ENCODE measurements at regions of chrX and their contacts with region 1.

Region 1: DNA sequence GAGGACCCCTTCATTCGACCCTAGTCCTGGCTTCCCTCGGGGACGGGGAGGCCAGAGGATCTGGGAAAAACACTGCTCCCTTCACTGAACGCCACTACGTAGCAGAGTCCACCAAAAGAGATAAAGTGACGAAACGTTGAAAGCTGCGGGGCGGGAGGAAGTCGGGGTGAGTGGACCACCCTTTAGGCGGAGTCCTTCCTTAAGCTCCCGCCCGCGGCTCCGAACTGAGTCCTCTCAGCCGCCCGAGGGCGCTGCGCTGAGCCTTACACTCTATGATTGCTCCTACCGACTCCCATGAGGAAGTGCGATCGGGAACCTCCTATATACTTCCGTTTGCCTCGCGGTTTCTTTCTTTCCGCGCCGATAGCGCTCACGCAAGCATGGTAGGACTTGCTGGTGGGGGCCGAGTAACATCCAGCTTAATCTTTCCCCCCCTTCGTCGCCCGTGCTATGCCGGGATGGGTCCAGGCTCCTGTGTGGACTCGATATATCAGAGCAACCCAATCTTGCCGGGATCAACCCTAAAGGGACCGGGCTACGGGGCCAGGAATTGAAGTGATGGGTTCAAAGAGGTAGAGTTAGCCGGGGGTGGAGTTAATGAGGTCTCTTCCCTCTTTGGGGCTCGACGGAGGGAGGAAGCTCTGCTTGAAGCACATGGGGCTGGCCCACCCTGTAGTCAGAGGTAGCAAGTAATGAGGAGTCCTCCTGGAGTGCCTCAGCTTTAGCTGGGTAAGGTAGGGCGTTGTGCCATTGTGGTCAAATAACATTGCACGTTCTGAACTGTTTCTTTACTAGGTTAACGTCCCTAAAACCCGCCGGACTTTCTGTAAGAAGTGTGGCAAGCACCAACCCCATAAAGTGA is at the start of gene RPL36A:
- DNase-seq: peak; percentile 91
- H3K4me3 ChIP-seq: peak within 1 kb of the TSS; percentile 61 to 92 (median 87)
- H3K27ac ChIP-seq: peak within 1 kb of the TSS; percentile 84
- H3K4me1 ChIP-seq: peaks cover 19% of the 10 kb centered on the region
- H3K27me3 ChIP-seq: no peaks in the 10 kb centered on the region
- CTCF ChIP-seq: peak; percentile 68 to 73
- POLR2A ChIP-seq: peak; percentile 96
- total RNA-seq, gene RPL36A: 284 and 329 TPM in 2 replicates

Region 2: GRCh38 chrX:100643956-100644860 is 746.7 kb before region 1 on chrX and contains the start of gene SRPX2:
- CTCF ChIA-PET with region 1: no interaction called
- POLR2A ChIA-PET with region 1: no interaction called
- dilution Hi-C with region 1: no loop called
- intact Hi-C with region 1: loop called (anchors 5 kb)
- DNase-seq: peak; percentile 85
- H3K4me3 ChIP-seq: peak within 1 kb of the TSS; percentile 52 to 95 (median 88)
- H3K27ac ChIP-seq: peak within 1 kb of the TSS; percentile 99
- H3K4me1 ChIP-seq: peaks cover 53% of the 10 kb centered on the region
- H3K27me3 ChIP-seq: no peaks in the 10 kb centered on the region
- CTCF ChIP-seq: no peak
- POLR2A ChIP-seq: peak; percentile 83
- total RNA-seq, gene SRPX2: 124 and 133 TPM in 2 replicates

Region 3: GRCh38 chrX:101348452-101349192 is 42.3 kb before region 1 on chrX and contains the start of gene TIMM8A:
- CTCF ChIA-PET with region 1: interaction called, 6 read pairs
- POLR2A ChIA-PET with region 1: interaction called, 14 read pairs
- dilution Hi-C with region 1: no loop called
- intact Hi-C with region 1: loop called (anchors 2 kb)
- DNase-seq: peak; percentile 74
- H3K4me3 ChIP-seq: peak within 1 kb of the TSS; percentile 78 to 87 (median 85)
- H3K27ac ChIP-seq: peak within 1 kb of the TSS; percentile 84
- H3K4me1 ChIP-seq: no peaks in the 10 kb centered on the region
- H3K27me3 ChIP-seq: no peaks in the 10 kb centered on the region
- CTCF ChIP-seq: no peak
- POLR2A ChIP-seq: peak; percentile 49
- total RNA-seq, gene TIMM8A: 15.2 and 17.5 TPM in 2 replicates

Region 4: DNA sequence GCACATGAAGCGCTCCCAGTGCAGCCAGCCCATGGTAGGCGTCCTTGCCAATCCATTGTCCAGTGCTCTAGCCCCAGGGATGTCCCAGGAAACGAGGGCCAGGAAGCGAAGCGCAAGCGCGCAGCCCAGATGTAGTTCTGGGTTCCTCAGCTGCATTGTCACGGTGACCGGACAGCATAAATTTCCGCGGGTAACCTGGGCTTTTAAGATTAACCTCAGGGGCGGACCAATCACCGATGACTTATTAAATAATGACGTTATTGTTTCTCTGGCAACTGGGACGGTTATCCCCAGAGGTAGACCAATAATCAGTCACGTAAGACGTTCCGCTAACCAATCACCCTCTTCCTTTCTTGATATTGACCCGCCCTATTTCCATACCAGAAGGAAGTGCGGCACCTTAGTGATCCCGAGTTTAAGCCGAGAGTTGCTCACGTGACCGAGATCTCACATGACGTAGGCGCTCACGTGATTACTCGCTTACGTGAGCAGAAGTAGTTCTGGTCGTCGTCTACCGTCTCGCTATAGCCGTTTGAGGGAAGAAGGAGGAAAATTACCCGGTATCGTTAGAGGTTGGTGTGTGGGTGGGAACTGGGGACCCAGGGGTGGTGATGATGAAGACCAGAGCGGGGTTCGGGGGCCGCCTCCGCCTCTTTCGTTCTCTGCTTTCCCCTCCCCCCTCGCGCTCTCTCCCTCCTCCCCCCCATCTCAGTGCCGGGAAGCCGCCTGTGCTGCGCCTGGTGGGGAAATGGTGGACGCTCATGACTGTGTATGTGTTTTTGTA is 17.0 kb after region 1 on chrX and contains the starts of genes GLA and HNRNPH2:
- CTCF ChIA-PET with region 1: interaction called, 4 read pairs
- POLR2A ChIA-PET with region 1: interaction called, 6 read pairs
- dilution Hi-C with region 1: no loop called
- intact Hi-C with region 1: loop called (anchors 1 kb)
- DNase-seq: peak; percentile 98
- H3K4me3 ChIP-seq: peak within 1 kb of the TSS; percentile 78 to 95 (median 91)
- H3K27ac ChIP-seq: peak within 1 kb of the TSS; percentile 97
- H3K4me1 ChIP-seq: peaks cover 12% of the 10 kb centered on the region
- H3K27me3 ChIP-seq: no peaks in the 10 kb centered on the region
- CTCF ChIP-seq: no peak
- POLR2A ChIP-seq: no peak
- total RNA-seq, gene GLA: 36.8 and 39.4 TPM in 2 replicates
- total RNA-seq, gene HNRNPH2: 58.5 and 59.1 TPM in 2 replicates

Region 5: DNA sequence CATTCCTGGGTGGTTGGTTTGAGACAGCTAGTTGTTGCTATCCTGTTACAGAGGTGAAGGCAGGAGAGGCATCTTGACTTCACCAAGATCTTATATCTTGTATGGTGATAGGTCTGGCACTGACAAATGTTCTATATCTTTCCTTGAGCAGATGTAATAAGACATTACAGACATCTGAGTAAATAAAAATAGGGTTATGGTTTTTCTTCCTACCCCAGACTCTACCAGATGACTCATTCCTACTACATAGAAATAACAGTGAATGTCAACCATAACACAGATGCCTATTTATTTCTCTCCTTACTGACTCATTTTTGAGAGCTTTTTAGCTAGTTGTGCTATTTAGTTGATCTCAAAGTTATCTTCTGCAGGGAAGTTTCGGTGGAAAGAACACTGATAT is 39.0 kb after region 1 on chrX:
- CTCF ChIA-PET with region 1: no interaction called
- POLR2A ChIA-PET with region 1: no interaction called
- dilution Hi-C with region 1: no loop called
- intact Hi-C with region 1: no loop called
- DNase-seq: no peak
- H3K4me3 ChIP-seq: no peak overlapping the region
- H3K27ac ChIP-seq: no peak overlapping the region
- H3K4me1 ChIP-seq: no peaks in the 10 kb centered on the region
- H3K27me3 ChIP-seq: no peaks in the 10 kb centered on the region
- CTCF ChIP-seq: no peak
- POLR2A ChIP-seq: no peak

Measured in endothelial cell of umbilical vein (primary cell).